ENCODE measurements at regions of chr16 and their contacts with region 1.

Region 1: GRCh38 chr16:84308120-84308519 is 13.4 kb downstream of the WFDC1 start:
- DNase-seq: peak; percentile 24 to 67 (median 58)
- ATAC-seq: peak; percentile 51 to 76 (median 74)
- H3K4me3 ChIP-seq: no peak overlapping the region
- H3K27ac ChIP-seq: no peak overlapping the region
- H3K4me1 ChIP-seq: peaks cover 0 to 13% (median 0%) of the 10 kb centered on the region in 12 donors
- H3K27me3 ChIP-seq: peaks cover 2 to 29% (median 10%) of the 10 kb centered on the region in 9 donors
- CTCF ChIP-seq: peak; percentile 34 to 66 (median 54)
- POLR2A ChIP-seq: no peak

Region 2: GRCh38 chr16:84277237-84277823 is 30.8 kb before region 1 on chr16:
- intact Hi-C with region 1: loop called in 2 of 10 experiments (anchors 2 kb)
- DNase-seq: peak; percentile 52 to 78 (median 66)
- ATAC-seq: peak in 3 of 4 donors; percentile 69 to 73 (median 71)
- H3K4me3 ChIP-seq: no peak overlapping the region
- H3K27ac ChIP-seq: no peak overlapping the region
- H3K4me1 ChIP-seq: no peaks in the 10 kb centered on the region
- H3K27me3 ChIP-seq: peaks cover 0 to 24% (median 0%) of the 10 kb centered on the region in 9 donors
- CTCF ChIP-seq: peak; percentile 73 to 95 (median 89)
- POLR2A ChIP-seq: no peak

Region 3: DNA sequence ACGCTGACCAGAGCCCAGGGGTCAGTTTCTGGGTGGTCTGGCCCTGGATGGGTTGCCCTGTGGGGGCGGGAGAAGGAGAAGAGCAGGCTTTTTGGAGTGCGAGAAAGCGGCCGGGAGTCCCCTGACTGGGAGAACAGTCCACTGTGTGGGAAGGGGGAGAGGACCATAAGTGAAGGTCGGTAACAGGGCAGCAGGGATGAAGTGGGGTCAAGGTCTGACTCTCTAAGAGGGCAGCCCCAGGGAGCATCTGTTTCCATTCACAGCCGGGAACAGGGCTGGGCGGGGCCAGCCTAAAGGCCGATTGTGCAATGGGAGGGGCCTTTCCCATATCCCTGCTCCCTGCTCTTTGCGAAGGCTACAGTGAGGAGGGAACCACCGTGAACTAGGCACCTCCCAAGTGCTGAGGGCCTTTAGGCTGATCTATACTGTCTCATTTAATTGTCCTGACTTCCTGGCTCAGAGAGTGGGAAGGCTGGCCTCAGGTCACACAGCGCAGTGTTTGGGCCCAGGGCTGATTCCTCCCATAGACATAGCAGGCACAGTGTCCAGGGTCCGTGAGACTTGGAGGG is 23.9 kb before region 1 on chr16:
- intact Hi-C with region 1: loop called in 2 of 10 experiments (anchors 2 kb)
- DNase-seq: peak; percentile 42 to 81 (median 73)
- ATAC-seq: peak; percentile 59 to 88 (median 84)
- H3K4me3 ChIP-seq: no peak overlapping the region
- H3K27ac ChIP-seq: peak overlapping the region in 11 of 12 donors; percentile 4 to 68 (median 56)
- H3K4me1 ChIP-seq: peaks cover 0 to 33% (median 18%) of the 10 kb centered on the region in 12 donors
- H3K27me3 ChIP-seq: peaks cover 0 to 11% (median 0%) of the 10 kb centered on the region in 9 donors
- CTCF ChIP-seq: no peak
- POLR2A ChIP-seq: no peak